Ovary (tissue), 10 donors: ENCODE measurements at regions of chr5 and their contacts with region 1.

Region 1: DNA sequence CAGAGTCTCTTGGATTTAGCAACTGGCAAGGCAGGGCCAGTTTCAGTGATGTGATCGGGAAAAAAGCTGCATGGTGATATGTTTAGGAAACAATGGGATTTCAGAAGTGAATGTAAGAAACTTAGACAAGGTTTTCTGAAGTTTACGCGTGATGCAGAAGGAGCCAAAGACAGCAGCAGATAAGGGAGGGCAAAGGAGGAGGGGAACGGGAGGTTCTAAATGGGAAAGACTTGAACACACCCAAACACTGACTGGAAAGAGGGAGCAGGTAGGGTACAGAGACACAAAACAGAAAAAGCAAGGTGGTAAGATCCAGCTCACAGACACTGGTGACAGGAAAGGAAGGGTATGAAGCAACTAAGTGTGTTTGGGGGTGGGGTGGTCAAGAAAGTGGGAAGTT is 115.4 kb downstream of the EPB41L4A start:
- DNase-seq: no peak
- H3K4me3 ChIP-seq: no peak overlapping the region
- H3K27ac ChIP-seq: no peak overlapping the region
- H3K4me1 ChIP-seq: no peaks in the 10 kb centered on the region
- H3K27me3 ChIP-seq: no peaks in the 10 kb centered on the region
- CTCF ChIP-seq: no peak
- EP300 ChIP-seq: no peak
- POLR2A ChIP-seq: no peak

Region 2: DNA sequence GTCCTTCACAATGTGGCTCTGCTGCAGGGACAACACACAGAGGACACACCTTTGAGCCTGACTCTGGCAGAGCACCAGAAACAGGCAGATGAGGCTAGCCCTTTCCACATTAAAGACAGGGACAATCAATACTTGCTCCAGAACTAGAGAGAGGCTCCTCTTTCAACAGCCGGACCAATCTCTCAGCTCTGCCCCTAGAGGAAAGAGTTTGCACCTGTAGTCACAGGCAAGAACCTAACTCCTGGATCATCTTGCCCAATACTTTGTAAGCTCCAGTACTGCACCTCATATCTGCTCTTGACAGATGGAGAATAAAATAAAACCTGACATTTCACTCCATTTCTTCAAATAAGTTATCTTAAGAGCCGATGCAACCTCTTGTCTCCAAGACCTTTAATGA is 63.3 kb after region 1 on chr5:
- intact Hi-C with region 1: loop called in 1 of 4 experiments (anchors 2 kb)
- DNase-seq: no peak
- H3K4me3 ChIP-seq: no peak overlapping the region
- H3K27ac ChIP-seq: no peak overlapping the region
- H3K4me1 ChIP-seq: peaks cover 1% of the 10 kb centered on the region
- H3K27me3 ChIP-seq: no peaks in the 10 kb centered on the region
- CTCF ChIP-seq: no peak
- EP300 ChIP-seq: no peak
- POLR2A ChIP-seq: no peak